HEK293 (cell line): ENCODE measurements at regions of chr17 and their contacts with region 1.

Region 1: GRCh38 chr17:3845621-3846441 is at the start of gene NCBP3:
- H3K4me3 ChIP-seq: peak within 1 kb of the TSS; percentile 96
- H3K27ac ChIP-seq: peak within 1 kb of the TSS; percentile 84
- H3K4me1 ChIP-seq: peaks cover 6% of the 10 kb centered on the region
- CTCF ChIP-seq: peak; percentile 97

Region 2: DNA sequence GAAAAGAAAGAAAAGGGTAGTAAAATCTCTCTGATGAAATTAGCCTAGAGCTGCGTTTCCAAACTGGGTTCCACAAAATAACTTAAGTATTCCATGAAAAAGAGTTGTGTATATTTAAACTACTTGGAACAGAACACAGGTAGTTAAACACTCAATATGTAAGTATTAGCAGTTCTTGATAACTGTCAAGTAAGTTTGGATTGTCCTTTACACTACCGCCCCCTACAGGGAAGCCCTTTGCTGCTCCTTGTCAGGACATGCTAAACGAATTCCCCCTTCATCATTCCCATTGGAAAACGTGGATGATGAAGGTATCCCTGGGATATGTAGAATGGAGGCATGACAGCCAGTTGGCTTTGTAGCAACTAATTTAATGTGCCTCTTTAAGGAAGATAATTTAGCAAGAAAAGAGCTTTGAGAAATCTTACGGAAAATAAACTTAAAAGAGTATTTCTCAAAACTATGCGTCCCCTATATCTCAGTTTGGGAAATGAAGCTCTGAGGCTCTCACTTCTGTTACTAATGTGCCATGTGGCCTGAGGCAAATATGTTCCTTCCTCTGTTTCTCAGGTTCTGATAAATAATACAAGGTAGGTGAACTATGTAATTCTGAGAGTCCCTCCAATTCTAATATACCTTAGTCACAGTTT is 18.6 kb before region 1 on chr17:
- CTCF ChIA-PET with region 1: interaction called, 86 read pairs
- POLR2A ChIA-PET with region 1: interaction called, 3 read pairs
- H3K4me3 ChIP-seq: no peak overlapping the region
- H3K27ac ChIP-seq: no peak overlapping the region
- H3K4me1 ChIP-seq: no peaks in the 10 kb centered on the region
- CTCF ChIP-seq: no peak

Region 3: GRCh38 chr17:3865176-3865575 is 19.3 kb after region 1 on chr17:
- CTCF ChIA-PET with region 1: interaction called, 68 read pairs
- POLR2A ChIA-PET with region 1: interaction called, 4 read pairs
- H3K4me3 ChIP-seq: no peak overlapping the region
- H3K27ac ChIP-seq: no peak overlapping the region
- H3K4me1 ChIP-seq: no peaks in the 10 kb centered on the region
- CTCF ChIP-seq: no peak

Region 4: GRCh38 chr17:3907483-3908216 is 61.8 kb after region 1 on chr17:
- CTCF ChIA-PET with region 1: interaction called, 52 read pairs
- POLR2A ChIA-PET with region 1: interaction called, 4 read pairs
- H3K4me3 ChIP-seq: no peak overlapping the region
- H3K27ac ChIP-seq: no peak overlapping the region
- H3K4me1 ChIP-seq: no peaks in the 10 kb centered on the region
- CTCF ChIP-seq: peak; percentile 68; the same call in 1 of the 2 replicates

Region 5: DNA sequence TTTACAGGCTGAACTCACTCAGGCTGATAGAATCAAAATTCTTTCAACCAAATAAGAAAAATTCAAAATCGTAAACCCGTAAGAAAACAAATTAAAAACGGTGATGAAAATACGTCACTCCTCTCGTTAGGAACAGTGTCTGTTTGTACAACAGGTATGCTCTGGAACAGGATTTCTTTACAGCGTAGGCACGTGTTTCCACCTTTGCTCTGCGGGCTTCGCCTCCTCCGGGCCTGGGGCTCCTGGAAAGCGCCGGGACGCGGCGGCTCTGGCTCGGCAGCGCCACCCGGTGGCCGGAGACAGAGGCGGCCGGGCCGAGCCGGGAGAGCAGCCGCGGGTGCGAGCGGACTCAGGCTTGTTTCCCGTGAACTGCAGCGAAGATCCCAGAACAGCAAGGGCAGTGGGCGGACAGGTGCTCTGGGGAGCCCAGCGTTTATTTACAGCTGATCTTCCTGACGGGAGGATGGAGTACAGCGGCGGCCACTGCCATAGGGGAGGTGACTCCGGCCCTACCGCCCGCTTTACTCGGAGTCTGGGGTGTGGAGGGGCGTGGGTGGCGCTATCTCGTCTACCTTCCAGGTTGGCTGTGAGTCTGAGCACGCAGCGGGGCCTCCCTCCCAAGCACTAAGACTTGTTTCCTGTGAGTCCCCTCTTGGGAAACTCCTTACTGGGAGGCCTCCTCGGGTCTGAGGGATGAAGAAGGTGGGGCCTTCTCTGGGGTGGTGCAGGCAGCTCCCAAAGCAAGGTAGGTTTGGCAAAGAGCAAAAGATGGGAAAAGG is 158.9 kb after region 1 on chr17:
- CTCF ChIA-PET with region 1: interaction called, 13 read pairs
- POLR2A ChIA-PET with region 1: interaction called, 3 read pairs
- H3K4me3 ChIP-seq: no peak overlapping the region
- H3K27ac ChIP-seq: no peak overlapping the region
- H3K4me1 ChIP-seq: no peaks in the 10 kb centered on the region
- CTCF ChIP-seq: peak; percentile 88